Activated naive CD4-positive, alpha-beta T cell treated with anti-CD3 and anti-CD28 coated beads for 36 hours (primary cell): ENCODE measurements at regions of chr17 and their contacts with region 1.

Region 1: DNA sequence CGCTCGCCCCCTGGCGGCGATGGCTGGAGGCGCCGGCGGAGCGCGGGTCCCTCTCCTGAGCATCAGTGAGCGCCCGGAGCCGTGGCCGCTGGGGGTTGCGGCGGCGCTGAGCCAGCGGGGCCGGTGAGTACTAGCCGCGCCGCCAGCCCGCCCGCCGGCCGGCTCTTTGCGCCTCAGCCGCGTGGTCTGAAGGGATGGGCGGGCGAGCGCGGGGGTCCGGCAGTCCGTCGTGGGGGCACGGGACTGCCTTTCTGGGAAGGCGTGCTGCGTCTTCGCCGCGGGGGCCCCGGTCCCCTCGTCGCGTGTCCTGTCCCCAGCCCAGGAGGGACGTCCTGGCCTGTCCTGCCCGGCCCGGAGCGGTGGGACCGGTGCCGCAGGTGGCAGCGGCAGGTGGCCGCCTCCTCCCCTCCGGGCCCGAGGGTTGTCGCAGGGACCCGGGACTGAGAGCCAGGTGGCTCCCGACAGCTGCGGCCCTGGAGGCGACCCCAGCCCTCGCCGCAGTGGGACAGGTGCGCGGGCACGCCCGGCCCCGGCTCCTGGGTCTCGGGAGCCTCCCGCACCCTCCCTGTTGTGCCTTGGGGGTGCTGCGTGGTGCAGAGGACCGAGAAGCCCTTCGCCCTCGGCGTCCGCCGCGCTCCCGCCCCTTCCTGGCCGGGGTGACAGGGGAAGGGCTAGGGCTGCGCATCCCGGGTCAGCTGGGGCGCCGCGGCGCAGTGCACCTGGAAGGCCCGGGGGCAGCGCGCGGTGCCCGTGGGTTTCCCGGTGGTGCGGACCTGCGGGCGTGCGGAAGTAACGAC is at the start of gene SPECC1:
- DNase-seq: peak; percentile 87
- H3K4me3 Mint-ChIP-seq: peak within 1 kb of the TSS; percentile 82
- H3K27ac Mint-ChIP-seq: no peak within 1 kb of the TSS
- H3K4me1 Mint-ChIP-seq: peaks cover 8% of the 10 kb centered on the region
- H3K27me3 Mint-ChIP-seq: peaks cover 49% of the 10 kb centered on the region
- total RNA-seq, gene SPECC1: 13.7 to 17.4 TPM

Region 2: DNA sequence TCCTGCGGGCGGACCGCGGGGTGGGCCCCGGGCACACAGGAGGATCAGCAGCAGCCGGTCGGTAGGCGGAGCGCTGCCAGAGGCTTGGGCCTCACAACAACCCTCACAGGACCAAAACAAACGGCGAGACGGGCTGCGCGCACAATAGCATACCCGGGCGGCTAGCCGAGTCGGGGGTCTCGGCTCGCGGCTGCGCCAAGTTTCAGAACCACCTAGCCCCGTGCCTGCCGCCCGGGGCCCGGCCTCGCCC is 142.5 kb before region 1 on chr17:
- CTCF ChIA-PET with region 1: no interaction called
- intact Hi-C with region 1: loop called (anchors 10 kb)
- DNase-seq: peak; percentile 69
- H3K4me3 Mint-ChIP-seq: peak overlapping the region; percentile 80
- H3K27ac Mint-ChIP-seq: peak overlapping the region; percentile 50
- H3K4me1 Mint-ChIP-seq: peaks cover 31% of the 10 kb centered on the region
- H3K27me3 Mint-ChIP-seq: no peaks in the 10 kb centered on the region

Region 3: GRCh38 chr17:20063665-20064648 is 54.5 kb after region 1 on chr17:
- CTCF ChIA-PET with region 1: interaction called, 3 read pairs
- intact Hi-C with region 1: loop called (anchors 10 kb)
- DNase-seq: peak; percentile 32
- H3K4me3 Mint-ChIP-seq: no peak overlapping the region
- H3K27ac Mint-ChIP-seq: peak overlapping the region; percentile 3
- H3K4me1 Mint-ChIP-seq: peaks cover 13% of the 10 kb centered on the region
- H3K27me3 Mint-ChIP-seq: no peaks in the 10 kb centered on the region

Region 4: DNA sequence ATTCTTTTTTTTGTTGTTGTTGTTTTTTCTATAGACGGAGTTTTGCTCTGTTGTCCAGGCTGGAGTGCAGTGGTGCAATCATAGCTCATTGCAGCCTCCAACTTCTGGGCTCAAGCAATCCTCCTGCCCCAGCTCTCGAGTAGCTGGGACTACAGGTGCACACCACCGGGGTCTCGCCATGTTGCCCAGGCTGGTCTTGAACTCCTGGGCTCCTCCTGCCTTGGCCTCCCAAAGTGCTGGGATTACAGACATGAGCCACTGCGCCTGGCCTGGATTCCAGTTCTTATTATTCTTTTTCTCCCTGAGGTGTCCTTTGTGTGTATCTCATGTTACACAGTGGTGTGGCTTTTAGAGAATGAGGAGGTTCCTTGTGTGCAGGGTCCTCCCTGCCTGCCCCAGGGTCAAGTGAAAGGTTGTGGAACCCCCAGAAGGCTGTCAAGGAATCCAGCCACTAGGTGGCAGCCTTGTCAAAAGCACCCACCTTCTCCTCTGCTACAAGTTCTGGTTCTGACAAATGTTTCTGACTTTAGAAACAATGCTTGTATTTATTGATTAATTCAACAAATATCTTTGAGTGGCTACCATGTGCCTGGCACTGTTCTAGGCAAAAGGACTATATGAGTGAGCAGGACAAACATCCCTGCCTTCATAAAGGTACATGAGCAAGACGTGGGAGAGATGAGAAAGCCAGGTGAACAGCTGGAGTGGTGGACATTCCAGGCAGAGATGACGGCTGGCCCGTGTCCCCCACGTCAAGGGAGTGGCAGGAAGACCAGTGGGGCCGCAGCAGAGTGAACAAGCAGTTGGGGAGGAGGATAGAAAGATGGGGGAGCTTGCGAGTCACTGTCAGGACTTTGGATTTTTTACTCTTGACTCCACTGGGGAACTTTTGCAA is 112.1 kb after region 1 on chr17:
- CTCF ChIA-PET with region 1: no interaction called
- intact Hi-C with region 1: loop called (anchors 1 kb)
- DNase-seq: peak; percentile 80
- H3K4me3 Mint-ChIP-seq: no peak overlapping the region
- H3K27ac Mint-ChIP-seq: no peak overlapping the region
- H3K4me1 Mint-ChIP-seq: no peaks in the 10 kb centered on the region
- H3K27me3 Mint-ChIP-seq: no peaks in the 10 kb centered on the region